Heart left ventricle (tissue), 16 donors: ENCODE measurements at regions of chr1 and their contacts with region 1.

Region 1: DNA sequence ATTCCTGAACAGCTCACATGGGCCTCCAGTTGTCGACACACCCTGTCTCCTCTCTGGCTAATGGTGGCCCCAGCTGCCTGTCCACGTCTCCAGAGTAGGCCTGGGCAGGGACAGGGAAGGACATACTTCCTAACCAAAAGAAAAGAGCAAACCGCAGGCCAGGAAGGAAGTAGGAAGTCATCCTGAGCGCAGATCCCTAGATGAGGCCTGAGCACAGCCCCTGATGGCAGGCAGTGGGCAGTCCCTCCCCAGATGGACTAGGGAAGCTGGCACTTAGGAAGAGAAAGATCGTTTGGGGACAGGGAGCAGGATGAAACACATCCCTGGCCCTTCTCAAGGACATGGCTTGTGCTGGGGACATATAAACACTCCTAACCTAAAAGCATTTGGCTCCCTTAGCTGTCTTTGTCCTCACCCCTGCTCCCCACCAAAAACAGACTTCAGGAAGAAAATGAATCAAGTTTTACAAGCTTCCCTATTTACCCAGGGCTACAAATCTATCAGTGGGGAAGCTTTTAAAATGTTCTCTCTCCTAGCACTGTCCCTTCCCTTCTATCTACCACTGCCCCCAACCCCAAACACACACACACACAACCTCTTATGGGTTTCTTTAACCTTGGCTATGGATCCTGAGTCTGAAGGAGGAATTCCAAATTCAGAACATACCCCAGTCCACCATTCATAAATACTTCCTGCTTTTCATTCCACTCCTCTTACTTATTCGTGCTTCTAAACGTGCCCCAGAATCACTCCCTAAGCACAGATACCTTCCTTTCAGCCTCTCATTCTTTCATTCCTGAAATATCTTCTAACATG is 21.1 kb downstream of the SSBP3 start:
- DNase-seq: no peak
- ATAC-seq: peak; percentile 25 to 71 (median 68)
- H3K4me3 ChIP-seq: no peak overlapping the region
- H3K27ac ChIP-seq: peak overlapping the region in 11 of 12 donors; percentile 21 to 73 (median 62)
- H3K4me1 ChIP-seq: peaks cover 0 to 67% (median 24%) of the 10 kb centered on the region in 12 donors
- H3K27me3 ChIP-seq: no peaks in the 10 kb centered on the region
- CTCF ChIP-seq: no peak
- POLR2A ChIP-seq: no peak

Region 2: GRCh38 chr1:54323324-54323739 is 61.8 kb before region 1 on chr1:
- intact Hi-C with region 1: loop called in 1 of 10 experiments (anchors 5 kb)
- DNase-seq: no peak
- ATAC-seq: peak in 1 of 4 donors; percentile 16
- H3K4me3 ChIP-seq: no peak overlapping the region
- H3K27ac ChIP-seq: peak overlapping the region in 2 of 12 donors; percentile 12 to 78
- H3K4me1 ChIP-seq: peaks cover 10 to 61% (median 54%) of the 10 kb centered on the region in 12 donors
- H3K27me3 ChIP-seq: no peaks in the 10 kb centered on the region
- CTCF ChIP-seq: peak in 9 of 12 donors; percentile 13 to 42 (median 32)
- POLR2A ChIP-seq: no peak